OCI-LY7 (cell line): ENCODE measurements at regions of chr1 and their contacts with region 1.

Region 1: GRCh38 chr1:204516180-204516879 is at the start of gene MDM4:
- DNase-seq: peak; percentile 98
- H3K4me3 ChIP-seq: peak within 1 kb of the TSS; percentile 88
- H3K27ac ChIP-seq: peak within 1 kb of the TSS; percentile 100
- H3K4me1 ChIP-seq: peaks cover 85% of the 10 kb centered on the region
- CTCF ChIP-seq: no peak
- total RNA-seq, gene MDM4: 102 and 120 TPM in 2 replicates

Region 2: GRCh38 chr1:203769505-203770343 is 746.6 kb before region 1 on chr1:
- CTCF ChIA-PET with region 1: no interaction called
- POLR2A ChIA-PET with region 1: interaction called, 3 read pairs
- intact Hi-C with region 1: loop called (anchors 10 kb)
- DNase-seq: no peak
- H3K4me3 ChIP-seq: no peak overlapping the region
- H3K27ac ChIP-seq: no peak overlapping the region
- H3K4me1 ChIP-seq: peaks cover 19% of the 10 kb centered on the region
- CTCF ChIP-seq: no peak

Region 3: GRCh38 chr1:204530932-204531331 is 14.6 kb after region 1 on chr1:
- CTCF ChIA-PET with region 1: interaction called, 6 read pairs
- POLR2A ChIA-PET with region 1: interaction called, 131 read pairs
- intact Hi-C with region 1: no loop called
- DNase-seq: no peak
- H3K4me3 ChIP-seq: no peak overlapping the region
- H3K27ac ChIP-seq: peak overlapping the region; percentile 71
- H3K4me1 ChIP-seq: peaks cover 55% of the 10 kb centered on the region
- CTCF ChIP-seq: no peak

Region 4: DNA sequence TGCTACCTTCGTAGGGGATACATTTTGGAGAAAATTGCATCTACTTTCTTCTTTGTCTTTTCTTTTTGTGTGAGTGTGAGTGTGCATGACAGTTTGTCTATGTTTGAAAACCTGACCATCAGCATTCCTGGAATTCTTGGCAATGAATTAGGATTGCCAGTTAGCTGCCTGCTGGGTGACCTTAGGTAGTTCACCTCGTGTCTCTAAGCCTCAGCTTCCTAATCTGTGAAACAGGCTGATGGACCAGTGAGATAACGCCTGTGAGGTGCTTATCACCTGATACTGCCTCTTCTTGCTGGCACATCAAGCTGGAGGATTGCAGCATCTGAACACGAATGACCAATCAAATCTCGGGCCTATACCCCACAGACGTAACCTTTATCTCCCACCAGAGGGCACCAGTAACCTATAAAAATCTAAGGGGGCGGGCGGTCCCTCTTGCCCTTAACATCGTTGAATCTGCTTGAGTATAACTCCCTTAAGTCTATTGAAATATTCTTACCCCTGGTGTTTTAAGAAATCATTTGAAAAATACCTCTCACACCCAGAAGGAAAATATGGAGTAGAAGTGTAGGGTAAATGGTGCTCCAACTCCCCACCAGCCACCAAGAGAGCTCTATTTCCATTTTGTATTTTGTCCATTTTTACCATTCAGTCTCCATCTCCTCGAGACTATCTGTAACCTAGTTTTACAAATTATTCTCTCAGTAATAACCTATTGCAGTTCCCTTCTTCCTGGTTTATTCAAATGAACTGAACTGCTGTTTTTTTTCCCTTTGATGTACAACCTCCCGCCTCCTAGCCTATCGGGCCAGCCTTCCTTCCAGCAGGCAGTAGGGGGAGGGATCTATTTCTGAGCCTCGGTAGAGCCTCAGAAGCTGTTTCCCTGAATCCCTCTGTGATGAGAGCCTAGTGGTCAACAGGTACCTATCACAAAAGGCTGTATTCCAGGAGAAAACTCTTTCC is 49.6 kb after region 1 on chr1:
- CTCF ChIA-PET with region 1: no interaction called
- POLR2A ChIA-PET with region 1: interaction called, 16 read pairs
- intact Hi-C with region 1: loop called (anchors 2 kb)
- DNase-seq: peak; percentile 90
- H3K4me3 ChIP-seq: peak overlapping the region; percentile 10
- H3K27ac ChIP-seq: peak overlapping the region; percentile 77
- H3K4me1 ChIP-seq: peaks cover 40% of the 10 kb centered on the region
- CTCF ChIP-seq: peak; percentile 90

Region 5: DNA sequence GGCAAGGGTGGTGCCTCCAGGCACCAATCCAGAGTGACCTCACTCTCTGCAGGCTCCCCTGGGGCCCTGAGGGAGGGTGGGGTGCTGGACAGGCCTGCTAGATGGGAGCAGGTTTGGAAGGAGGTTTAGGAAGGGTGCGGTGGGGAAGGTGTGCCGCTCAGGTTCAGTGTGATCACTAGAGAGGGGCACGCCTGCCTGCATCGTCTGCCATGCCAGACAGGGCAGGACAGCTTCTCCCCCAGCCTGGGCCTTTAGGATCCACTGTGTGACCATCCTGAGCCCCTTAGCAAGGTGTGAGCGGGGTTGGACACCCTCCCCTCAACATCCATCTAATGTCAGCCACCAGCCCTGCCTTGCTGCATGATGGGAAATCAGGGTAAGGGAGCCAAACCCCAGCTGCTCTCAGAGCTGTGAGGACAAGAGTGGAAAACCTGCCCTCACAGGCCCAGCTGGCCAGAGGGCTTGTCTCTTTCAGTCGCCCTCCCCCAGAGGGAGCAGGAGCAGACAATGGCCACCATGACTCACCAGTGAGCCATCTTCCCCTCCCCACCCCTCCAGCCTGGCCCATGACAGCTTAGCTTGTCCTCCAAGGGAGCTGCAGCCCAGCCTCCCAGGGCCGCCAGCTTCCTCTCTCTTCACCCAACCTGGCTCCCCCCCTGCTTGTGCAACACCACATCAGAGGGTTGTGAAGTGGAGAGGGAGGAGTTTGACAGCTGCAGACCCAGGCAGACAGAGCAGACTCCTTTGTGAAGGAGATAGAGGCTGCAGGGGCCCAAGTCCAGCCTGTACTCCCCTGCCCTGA is 768.2 kb after region 1 on chr1:
- CTCF ChIA-PET with region 1: no interaction called
- POLR2A ChIA-PET with region 1: no interaction called
- intact Hi-C with region 1: loop called (anchors 10 kb)
- DNase-seq: peak; percentile 92
- H3K4me3 ChIP-seq: peak overlapping the region; percentile 44
- H3K27ac ChIP-seq: peak overlapping the region; percentile 94
- H3K4me1 ChIP-seq: peaks cover 88% of the 10 kb centered on the region
- CTCF ChIP-seq: no peak

Region 6: GRCh38 chr1:206050655-206051235 is 1534.4 kb after region 1 on chr1:
- CTCF ChIA-PET with region 1: no interaction called
- POLR2A ChIA-PET with region 1: no interaction called
- intact Hi-C with region 1: loop called (anchors 5 kb)
- DNase-seq: peak; percentile 98
- H3K4me3 ChIP-seq: peak overlapping the region; percentile 55
- H3K27ac ChIP-seq: peak overlapping the region; percentile 98
- H3K4me1 ChIP-seq: peaks cover 74% of the 10 kb centered on the region
- CTCF ChIP-seq: peak; percentile 71